Activated naive CD4-positive, alpha-beta T cell treated with anti-CD3 and anti-CD28 coated beads, Interleukin-2, amount 10 ng/mL, durations not matched to agents 7 days and 5 days (primary cell): ENCODE measurements at regions of chr18 and their contacts with region 1.

Region 1: DNA sequence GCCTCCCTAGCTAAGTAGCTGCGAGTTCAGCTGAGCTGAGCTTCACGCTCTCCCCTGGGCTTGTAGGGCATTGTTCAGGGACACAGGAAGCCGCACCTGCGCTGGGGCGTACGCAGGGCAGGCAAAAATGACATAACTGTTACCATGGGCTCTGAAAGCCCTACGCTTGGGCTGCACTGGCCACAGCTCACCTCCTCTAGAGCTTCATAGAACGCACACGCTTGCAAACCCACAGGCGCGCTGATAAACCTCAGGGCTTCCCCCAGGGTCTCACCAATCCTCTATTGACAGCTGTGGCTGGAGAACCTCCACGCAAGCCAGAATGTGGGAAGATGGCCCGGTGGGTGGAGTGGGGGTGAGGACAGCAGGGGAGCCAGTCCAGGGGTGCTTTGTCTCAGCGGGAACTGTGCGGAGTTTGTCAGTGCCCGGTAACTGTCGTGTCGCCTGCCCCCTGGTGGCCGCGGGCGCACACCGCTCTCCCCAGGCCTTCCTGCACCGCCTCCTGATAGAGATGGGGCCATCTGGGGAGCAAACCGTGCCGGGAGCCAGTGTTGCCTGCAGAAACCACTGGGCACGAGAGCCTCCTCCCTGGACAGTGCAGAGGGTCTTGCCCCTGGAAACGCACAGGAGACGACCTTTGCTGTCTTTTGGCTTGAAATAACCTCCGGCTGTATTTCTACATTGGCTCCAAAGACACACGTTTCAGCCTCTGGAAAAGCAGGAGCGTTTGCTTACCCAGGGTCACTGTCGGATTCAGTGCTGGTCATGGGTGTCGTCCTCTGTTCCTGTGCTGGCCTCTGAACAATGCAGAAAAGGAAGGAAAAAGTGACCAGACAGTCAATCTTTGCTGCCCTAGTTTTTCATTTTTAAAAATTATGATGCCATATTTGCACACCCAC is 17.0 kb upstream of the CIDEA start:
- DNase-seq: peak; percentile 76
- H3K4me3 Mint-ChIP-seq: no peak overlapping the region
- H3K27ac Mint-ChIP-seq: no peak overlapping the region
- H3K4me1 Mint-ChIP-seq: no peaks in the 10 kb centered on the region
- H3K27me3 Mint-ChIP-seq: peaks cover 30% of the 10 kb centered on the region

Region 2: GRCh38 chr18:12005538-12006487 is 231.4 kb before region 1 on chr18:
- CTCF ChIA-PET with region 1: no interaction called
- DNase-seq: no peak
- H3K4me3 Mint-ChIP-seq: no peak overlapping the region
- H3K27ac Mint-ChIP-seq: no peak overlapping the region
- H3K4me1 Mint-ChIP-seq: no peaks in the 10 kb centered on the region
- H3K27me3 Mint-ChIP-seq: no peaks in the 10 kb centered on the region

Region 3: GRCh38 chr18:12092398-12093229 is 144.6 kb before region 1 on chr18:
- CTCF ChIA-PET with region 1: interaction called, 10 read pairs
- DNase-seq: no peak
- H3K4me3 Mint-ChIP-seq: no peak overlapping the region
- H3K27ac Mint-ChIP-seq: no peak overlapping the region
- H3K4me1 Mint-ChIP-seq: no peaks in the 10 kb centered on the region
- H3K27me3 Mint-ChIP-seq: peaks cover 4% of the 10 kb centered on the region